ENCODE measurements at regions of chr11 and their contacts with region 1.

Region 1: DNA sequence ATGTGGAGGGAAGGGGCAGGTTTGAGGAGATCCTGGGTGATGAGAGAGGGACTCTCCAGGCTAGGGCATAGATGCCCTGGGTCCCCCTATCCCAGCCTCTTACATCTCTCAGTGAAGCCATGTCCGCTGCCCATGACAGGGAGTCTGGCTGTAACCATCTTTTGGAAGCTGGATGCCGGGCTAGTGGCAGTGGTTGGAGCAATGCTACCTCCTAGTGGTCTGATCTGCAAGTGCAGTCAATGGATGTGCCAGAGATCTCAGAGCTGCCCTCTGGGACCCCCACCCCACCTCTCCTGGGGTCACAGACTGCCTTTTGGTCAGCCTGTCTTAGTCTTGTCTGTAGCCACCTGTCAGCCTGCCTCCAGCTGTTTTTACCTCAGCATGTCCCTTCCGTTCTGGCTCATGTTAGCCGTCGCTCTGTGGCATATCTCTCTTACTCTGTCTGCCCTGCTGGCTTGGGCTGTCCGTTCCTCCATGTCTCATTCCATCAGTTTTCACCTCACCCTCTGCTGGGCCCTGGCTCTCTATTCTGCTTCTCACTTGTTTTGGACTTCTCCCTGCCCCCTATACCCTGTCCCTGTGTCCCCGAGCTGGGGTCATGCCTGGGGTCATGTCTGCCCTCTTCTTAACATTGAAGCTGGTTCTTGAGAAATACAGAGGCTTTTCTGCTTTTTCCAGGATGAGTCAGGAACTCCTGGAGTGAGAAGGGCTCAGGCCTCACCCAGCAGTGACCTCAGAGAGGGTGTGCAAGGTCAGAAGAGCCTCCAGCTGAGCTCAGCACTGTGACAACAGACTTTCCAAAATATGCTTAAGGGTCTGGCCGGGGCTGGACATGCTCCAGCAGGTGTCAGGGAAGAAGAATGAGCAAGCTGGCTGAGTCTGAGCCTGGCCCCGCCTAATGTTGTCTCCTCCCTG is 52.0 kb upstream of the THY1 start:
- DNase-seq: no peak
- H3K4me3 ChIP-seq: no peak overlapping the region
- H3K27ac ChIP-seq: peak overlapping the region; percentile 61
- H3K27me3 ChIP-seq: peaks cover 17% of the 10 kb centered on the region
- CTCF ChIP-seq: peak; percentile 97

Region 2: GRCh38 chr11:119323538-119324033 is 151.4 kb before region 1 on chr11:
- CTCF ChIA-PET with region 1: interaction called, 40 read pairs
- POLR2A ChIA-PET with region 1: no interaction called
- DNase-seq: no peak
- H3K4me3 ChIP-seq: no peak overlapping the region
- H3K27ac ChIP-seq: no peak overlapping the region
- H3K27me3 ChIP-seq: no peaks in the 10 kb centered on the region
- CTCF ChIP-seq: peak; percentile 81

Region 3: DNA sequence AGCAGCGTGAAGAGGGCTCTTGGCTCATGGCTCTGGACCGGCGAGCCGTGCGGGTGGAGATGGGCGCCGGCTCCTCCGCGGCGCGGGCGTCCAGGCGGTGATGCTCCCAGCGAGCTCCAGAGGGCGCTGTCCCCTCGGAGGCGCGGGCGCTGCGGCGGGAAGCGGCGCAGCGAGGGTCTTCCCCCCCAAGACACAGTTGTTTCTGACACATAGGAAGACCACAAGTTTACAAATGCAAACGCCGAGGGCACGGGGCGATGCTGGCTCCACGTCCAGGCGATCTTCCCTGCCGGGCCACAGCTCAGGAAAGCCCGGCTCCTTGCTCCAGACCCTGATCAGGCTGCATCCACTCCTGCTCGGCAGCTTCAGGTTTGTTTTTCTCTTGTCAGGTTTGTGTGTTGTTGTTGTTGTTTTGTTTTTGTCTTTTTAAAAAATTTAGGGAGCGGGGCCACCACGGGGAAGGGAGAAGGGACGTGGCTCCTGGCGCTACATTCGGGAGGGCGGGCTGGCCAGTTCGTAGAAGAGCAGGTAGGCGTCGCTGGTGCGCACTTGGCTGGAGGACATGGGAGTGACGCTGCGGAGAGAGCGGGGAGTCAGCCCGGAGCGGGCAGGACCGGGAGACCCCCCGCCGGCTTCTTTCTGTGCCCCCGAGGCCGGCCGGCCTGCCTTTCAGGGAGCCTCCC is 118.4 kb before region 1 on chr11:
- CTCF ChIA-PET with region 1: interaction called, 123 read pairs
- POLR2A ChIA-PET with region 1: interaction called, 8 read pairs
- DNase-seq: no peak
- H3K4me3 ChIP-seq: peak overlapping the region; percentile 66
- H3K27ac ChIP-seq: no peak overlapping the region
- H3K27me3 ChIP-seq: peaks cover 20% of the 10 kb centered on the region
- CTCF ChIP-seq: peak; percentile 80

Region 4: DNA sequence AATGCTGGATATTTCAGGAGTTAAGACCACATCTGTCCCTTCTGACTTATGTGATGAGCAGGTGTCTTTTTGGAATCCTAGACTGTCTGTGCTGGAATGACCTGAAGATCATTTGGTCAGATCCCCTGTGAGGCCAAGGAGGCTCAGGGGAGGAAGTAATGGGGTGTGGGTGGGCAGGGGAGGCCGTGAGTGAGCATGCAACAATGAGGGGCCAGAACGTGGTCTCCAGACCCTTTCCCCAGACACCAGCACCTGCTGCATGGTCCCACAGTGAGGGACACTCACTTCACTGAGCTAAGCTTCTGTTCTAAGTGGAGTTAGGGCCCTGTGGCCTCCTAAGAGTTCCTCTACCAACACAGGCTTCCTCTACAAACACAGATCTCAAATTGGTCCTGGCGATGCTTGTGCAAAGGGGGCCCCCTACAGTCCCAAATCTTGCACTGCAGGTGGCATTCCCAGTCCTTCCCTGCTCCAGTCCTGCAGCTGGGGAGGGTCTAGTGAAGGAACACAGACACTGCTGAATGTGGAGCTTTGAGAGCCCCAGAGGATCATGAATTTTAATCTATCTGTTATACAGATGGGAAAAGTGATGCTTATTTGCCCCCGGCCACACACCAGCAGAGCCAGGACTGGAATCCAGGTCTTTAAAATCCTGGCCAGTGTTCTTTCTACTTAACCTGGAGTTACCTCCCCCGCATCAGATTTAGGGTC is 100.9 kb before region 1 on chr11:
- CTCF ChIA-PET with region 1: interaction called, 46 read pairs
- POLR2A ChIA-PET with region 1: no interaction called
- DNase-seq: peak; percentile 51
- H3K4me3 ChIP-seq: no peak overlapping the region
- H3K27ac ChIP-seq: no peak overlapping the region
- H3K27me3 ChIP-seq: peaks cover 12% of the 10 kb centered on the region
- CTCF ChIP-seq: peak; percentile 97

Region 5: DNA sequence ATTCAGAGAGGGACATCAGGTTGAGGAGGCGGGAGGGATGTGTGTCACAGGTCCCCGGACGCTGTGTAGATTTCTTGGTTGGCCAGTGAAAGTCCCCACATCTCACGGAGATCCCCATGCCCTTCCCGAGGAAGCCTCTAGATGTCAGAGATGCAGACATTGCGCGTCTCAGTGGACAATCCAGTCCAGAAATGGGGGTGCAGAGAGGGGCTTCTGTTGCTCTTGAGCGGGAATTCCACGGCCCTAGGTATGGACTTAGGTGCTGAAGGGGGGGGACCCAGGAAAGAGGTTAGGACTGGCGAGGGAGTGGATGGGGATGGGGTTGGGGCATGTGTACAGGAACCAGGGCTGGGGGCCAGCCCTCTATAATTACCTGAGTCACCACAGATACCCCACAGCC is 59.0 kb before region 1 on chr11:
- CTCF ChIA-PET with region 1: interaction called, 17 read pairs
- POLR2A ChIA-PET with region 1: interaction called, 18 read pairs
- DNase-seq: no peak
- H3K4me3 ChIP-seq: no peak overlapping the region
- H3K27ac ChIP-seq: no peak overlapping the region
- H3K27me3 ChIP-seq: no peaks in the 10 kb centered on the region
- CTCF ChIP-seq: no peak

Region 6: GRCh38 chr11:119432484-119433357 is 42.2 kb before region 1 on chr11:
- CTCF ChIA-PET with region 1: interaction called, 7 read pairs
- POLR2A ChIA-PET with region 1: interaction called, 13 read pairs
- DNase-seq: peak; percentile 66
- H3K4me3 ChIP-seq: peak overlapping the region; percentile 50
- H3K27ac ChIP-seq: peak overlapping the region; percentile 93
- H3K27me3 ChIP-seq: peaks cover 5% of the 10 kb centered on the region
- CTCF ChIP-seq: no peak

Region 7: GRCh38 chr11:119496469-119496868 is 21.5 kb after region 1 on chr11:
- CTCF ChIA-PET with region 1: no interaction called
- POLR2A ChIA-PET with region 1: no interaction called
- DNase-seq: no peak
- H3K4me3 ChIP-seq: no peak overlapping the region
- H3K27ac ChIP-seq: no peak overlapping the region
- H3K27me3 ChIP-seq: peaks cover 36% of the 10 kb centered on the region
- CTCF ChIP-seq: no peak